ENCODE measurements at regions of chr6 and their contacts with region 1.

Region 1: DNA sequence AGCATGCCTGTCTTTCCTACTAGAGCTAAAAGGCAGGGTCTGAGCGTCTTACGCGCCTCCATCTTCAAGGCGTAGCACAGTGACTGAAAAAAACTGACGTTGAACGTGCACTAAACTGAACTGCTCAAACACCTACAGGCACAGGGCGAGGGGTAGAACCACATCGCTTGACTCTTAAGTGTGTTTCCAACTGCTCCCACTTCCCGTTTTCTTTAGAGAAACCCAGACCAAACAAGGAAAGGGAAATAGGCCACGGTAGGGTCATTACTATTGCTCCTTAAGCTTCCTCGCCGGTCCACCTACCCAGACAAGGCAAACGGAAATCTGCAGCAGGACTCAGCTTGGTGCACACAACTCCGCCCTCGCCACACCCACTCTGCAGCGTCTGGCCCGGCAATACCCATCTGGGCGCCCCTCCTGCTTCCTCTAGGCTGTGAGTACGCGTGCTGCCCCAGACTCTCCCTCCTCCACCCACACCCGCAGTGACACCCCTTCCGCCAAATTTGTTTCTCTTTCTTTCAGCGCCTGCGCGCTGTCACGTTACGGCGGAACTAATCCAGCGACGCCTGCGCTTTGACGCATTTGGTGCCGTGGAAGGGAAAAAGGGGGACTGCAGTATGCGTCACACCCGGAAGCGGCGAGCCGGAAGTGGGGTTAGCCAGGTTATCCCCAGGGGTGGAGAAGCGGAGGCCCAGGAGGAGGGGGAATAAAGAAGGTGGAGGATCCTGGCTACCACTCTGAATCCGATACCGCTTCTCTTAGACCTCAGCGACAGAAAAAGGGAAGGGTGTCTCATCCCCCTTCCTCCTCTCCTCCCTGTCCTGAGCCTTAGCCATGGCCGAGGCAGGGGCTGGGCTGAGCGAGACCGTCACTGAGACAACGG is at the start of gene PPP1R11:
- DNase-seq: peak; percentile 91

Region 2: GRCh38 chr6:30212865-30213666 is 146.2 kb after region 1 on chr6 and contains the start of gene TRIM26:
- CTCF ChIA-PET with region 1: no interaction called
- POLR2A ChIA-PET with region 1: interaction called, 11 read pairs
- DNase-seq: peak; percentile 96